Left cardiac atrium (tissue), 4 donors: ENCODE measurements at regions of chrX and their contacts with region 1.

Region 1: GRCh38 chrX:110146521-110146920 is 143.6 kb downstream of the TMEM164 start:
- DNase-seq: no peak
- ATAC-seq: peak; percentile 56 to 80

Region 2: DNA sequence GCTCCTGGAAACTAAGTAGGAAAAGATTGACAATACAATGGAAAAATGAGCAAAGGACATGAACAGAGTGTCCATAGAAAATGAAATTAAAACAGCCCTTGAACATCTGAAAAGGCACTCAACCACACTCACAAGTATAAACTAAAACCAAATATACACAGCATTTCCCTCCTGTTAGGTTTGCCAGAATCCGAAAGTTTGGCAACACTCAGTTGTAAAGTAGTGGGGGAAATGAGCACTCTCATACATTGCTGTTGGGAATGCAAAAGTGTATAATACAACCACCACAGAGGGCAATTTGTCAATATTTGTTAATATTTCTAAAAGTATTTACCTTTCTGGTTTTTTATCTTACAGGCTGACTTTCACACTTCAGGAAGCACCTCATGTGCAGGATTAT is 227.8 kb before region 1 on chrX:
- intact Hi-C with region 1: loop called in 1 of 2 experiments (anchors 5 kb)
- DNase-seq: no peak
- ATAC-seq: no peak

Region 3: DNA sequence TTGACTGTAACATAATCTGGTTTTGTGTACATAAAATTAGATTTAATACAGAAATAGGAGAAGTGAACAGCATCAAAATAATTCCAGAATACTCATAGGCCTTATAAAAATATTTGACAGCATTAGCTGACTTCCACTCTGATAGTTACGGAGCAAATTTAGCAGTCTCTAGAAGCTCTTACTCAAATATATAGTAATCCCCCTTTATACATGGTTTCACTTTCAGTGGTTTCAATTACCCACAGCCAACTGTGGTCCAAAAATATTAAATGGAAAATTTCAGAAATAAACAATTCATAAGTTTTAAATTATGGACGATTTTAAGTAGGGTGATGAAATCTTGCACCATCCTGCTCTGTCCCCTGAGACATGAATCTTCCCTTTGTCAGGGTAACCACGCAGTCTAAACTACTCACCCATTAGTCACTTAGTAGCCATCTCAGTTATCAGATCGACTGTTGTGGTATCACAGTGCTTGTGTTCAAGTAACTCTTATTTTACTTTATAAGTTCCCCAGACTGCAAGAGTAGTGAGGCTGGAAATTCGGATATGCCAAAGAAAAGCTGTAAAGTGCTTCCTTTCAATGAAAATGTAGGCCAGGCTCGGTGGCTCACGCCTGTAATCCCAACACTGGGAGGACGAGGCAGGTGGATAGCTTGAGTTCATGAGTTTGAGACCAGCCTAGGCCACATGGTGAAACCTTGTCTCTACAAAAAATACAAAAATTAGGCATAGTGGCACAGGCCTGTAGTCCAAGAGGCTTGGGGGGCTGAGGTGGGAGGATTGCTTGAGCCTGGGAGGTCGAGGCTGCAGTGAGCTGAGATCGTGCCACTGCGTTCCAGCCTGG is 194.9 kb after region 1 on chrX:
- intact Hi-C with region 1: no loop called
- DNase-seq: no peak
- ATAC-seq: no peak

Region 4: DNA sequence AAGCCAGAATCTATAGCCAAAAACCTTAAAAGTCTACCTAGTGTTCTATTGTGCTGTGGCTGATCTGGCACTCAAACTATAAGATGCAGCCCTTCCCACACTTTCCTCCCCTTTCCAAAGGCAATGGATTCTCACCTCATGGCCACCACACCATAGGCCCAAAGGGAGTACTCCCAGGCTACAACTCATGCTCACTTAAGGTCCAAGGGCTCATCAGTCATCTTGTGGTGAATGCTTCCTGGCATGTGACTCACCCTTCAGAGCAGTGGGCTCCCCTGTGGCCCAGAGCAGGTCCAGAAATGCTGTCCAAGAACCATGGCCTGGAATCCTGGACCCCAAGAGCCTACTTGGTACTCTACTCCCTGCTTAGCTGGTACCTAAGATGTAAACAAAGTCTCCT is 468.1 kb after region 1 on chrX:
- intact Hi-C with region 1: no loop called
- DNase-seq: no peak
- ATAC-seq: no peak